ENCODE measurements at regions of chr3 and their contacts with region 1.

Region 1: DNA sequence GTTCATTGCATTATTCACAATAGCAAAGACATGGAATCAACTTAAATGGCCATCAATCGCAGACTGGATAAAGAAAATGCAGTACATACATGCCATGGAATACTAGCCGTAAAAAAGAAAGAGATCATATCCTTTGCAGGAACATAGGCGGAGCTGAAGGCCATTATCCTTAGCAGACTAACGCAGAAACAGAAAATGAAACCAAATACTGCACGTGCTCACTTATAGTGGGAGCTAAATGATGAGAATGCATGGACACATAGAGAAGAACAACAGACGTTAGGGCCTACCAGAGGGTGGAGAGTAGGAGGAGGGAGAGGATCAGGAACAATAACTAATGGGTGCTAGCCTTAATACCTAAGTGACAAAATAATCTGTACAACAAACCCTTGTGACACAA is 57.9 kb downstream of the RASA2 start:
- DNase-seq: no peak
- ATAC-seq: no peak
- H3K4me3 ChIP-seq: no peak overlapping the region
- H3K27ac ChIP-seq: no peak overlapping the region
- H3K4me1 ChIP-seq: no peaks in the 10 kb centered on the region
- H3K27me3 ChIP-seq: no peaks in the 10 kb centered on the region
- CTCF ChIP-seq: no peak

Region 2: DNA sequence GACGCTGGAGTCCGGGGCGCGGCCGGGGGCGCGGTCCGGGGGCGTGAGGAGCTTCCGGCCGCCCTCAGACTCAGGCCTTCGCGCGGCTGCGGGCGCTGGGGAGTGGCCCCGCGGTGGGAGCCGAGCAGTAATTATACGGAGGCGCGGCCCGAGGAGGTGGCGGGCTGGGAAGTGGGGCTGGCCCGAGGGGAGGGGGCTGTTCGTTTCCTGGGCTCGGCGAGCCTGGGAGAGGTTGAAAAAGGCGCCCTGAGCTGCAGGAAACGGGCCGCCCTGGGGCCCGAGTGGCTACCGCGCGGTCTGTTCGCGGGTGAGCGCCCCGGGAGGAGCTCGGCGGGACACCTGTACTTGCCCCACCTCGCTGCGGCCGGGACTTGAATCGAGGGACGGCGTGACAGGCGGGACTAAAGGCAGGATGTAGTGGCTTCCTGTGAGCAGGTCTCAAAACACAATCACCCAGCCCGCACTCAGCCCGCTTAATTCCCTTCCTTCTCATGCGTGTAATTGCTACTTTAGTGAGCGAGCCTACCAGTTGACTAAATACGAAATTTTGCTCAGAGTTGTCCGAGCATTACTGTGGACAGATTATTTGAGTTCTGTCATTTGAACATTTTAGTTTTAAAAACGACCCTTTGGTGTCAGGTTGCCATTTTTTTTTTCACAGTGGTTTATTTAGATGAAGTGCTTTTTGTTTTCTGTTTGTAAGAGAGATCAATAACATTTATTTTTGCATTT is 57.0 kb before region 1 on chr3:
- intact Hi-C with region 1: loop called in 1 of 2 experiments (anchors 5 kb)
- DNase-seq: peak; percentile 66 to 77
- ATAC-seq: peak; percentile 74 to 87 (median 80)
- H3K4me3 ChIP-seq: peak overlapping the region; percentile 87
- H3K27ac ChIP-seq: peak overlapping the region; percentile 94
- H3K4me1 ChIP-seq: peaks cover 6% of the 10 kb centered on the region
- H3K27me3 ChIP-seq: no peaks in the 10 kb centered on the region
- CTCF ChIP-seq: peak; percentile 4

Region 3: DNA sequence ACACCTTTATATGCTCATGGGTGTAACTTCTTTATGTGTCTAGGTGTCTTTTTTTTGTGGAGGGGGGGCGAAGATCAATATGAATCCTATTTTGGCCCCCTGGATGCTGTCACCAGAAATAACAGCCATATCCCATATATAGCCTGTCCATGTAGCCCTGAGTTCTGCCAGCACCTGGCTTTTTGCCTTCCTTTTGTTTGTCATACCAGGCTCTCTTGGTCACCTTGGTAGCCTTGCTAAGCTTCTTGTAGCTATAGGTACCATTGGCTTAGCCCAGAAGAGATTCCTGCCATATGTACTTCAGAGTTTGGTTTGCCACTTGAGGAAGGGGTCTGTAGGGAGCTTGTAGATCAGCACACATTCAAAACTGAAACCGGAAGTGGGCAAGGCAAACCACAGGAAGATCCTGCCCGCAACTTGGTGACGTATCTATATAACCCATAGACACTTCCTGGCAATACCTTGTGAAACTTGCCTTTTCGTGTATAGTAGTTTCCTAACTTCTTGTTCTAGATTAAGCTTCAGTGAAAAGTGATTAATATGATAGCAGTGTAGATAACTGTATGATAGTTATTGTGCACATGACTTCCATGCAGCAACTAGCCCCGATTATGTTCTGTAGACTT is 46.0 kb before region 1 on chr3:
- intact Hi-C with region 1: no loop called
- DNase-seq: no peak
- ATAC-seq: peak in 3 of 4 donors; percentile 37 to 63 (median 42)
- H3K4me3 ChIP-seq: no peak overlapping the region
- H3K27ac ChIP-seq: no peak overlapping the region
- H3K4me1 ChIP-seq: peaks cover 20% of the 10 kb centered on the region
- H3K27me3 ChIP-seq: no peaks in the 10 kb centered on the region
- CTCF ChIP-seq: no peak

Region 4: DNA sequence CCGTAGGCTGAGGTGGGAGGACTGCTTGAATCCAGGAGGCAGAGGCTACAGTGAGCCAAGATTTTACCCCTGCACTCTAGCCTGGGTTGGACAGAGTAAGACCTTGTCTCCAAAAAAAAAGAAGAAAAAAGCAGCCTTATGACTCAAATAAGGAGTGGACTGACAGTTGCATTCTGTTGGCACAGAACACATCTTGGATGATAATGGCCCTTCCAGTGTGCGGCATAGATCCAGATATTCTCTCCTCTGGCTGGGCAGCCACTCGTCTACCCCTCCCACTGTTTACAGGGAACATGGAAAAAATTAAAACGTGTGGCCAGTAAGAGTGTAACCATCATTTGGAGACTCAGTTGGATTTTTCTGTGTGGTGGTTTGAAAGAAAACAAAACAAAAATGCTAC is 74.8 kb after region 1 on chr3:
- intact Hi-C with region 1: no loop called
- DNase-seq: no peak
- ATAC-seq: no peak
- H3K4me3 ChIP-seq: no peak overlapping the region
- H3K27ac ChIP-seq: no peak overlapping the region
- H3K4me1 ChIP-seq: no peaks in the 10 kb centered on the region
- H3K27me3 ChIP-seq: no peaks in the 10 kb centered on the region
- CTCF ChIP-seq: no peak

Measured in psoas muscle (tissue), 8 donors.